Endothelial cell of umbilical vein (primary cell): ENCODE measurements at regions of chr15 and their contacts with region 1.

Region 1: DNA sequence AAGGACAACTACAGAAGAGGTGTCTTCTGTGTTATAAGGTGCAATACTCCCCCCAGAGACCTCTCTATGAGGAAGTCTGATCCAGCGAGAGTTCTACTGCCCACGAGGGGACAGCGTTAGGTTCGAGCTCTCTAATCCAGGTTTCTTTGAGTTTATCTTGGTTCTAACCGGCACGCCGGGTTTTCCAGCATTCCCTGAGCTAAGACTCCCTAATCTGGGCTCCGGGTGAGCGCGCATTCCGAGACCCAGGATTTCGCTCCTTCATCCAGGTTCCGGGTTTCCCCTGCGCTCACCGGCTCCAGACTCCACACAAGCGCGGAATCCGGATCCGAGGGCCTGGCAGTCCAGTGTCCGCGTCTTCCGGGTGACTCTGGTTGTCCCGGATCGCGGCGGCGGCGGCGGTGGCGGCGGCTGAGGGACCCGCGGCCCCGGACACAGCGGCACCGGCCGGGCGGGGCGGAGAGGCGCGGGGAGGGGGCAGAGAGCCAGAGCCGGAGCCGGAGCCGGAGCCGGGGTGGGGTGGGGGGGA is at the start of gene ZNF609:
- DNase-seq: peak; percentile 90
- H3K4me3 ChIP-seq: peak within 1 kb of the TSS; percentile 61 to 93 (median 80)
- H3K27ac ChIP-seq: peak within 1 kb of the TSS; percentile 59
- H3K4me1 ChIP-seq: peaks cover 21% of the 10 kb centered on the region
- H3K27me3 ChIP-seq: no peaks in the 10 kb centered on the region
- CTCF ChIP-seq: no peak
- POLR2A ChIP-seq: no peak
- total RNA-seq, gene ZNF609: 49.6 and 52.8 TPM in 2 replicates

Region 2: GRCh38 chr15:64430000-64430735 is 30.1 kb before region 1 on chr15:
- CTCF ChIA-PET with region 1: interaction called, 12 read pairs
- POLR2A ChIA-PET with region 1: interaction called, 3 read pairs
- dilution Hi-C with region 1: no loop called
- intact Hi-C with region 1: loop called (anchors 2 kb)
- DNase-seq: peak; percentile 77
- H3K4me3 ChIP-seq: no peak overlapping the region
- H3K27ac ChIP-seq: no peak overlapping the region
- H3K4me1 ChIP-seq: peaks cover 2% of the 10 kb centered on the region
- H3K27me3 ChIP-seq: no peaks in the 10 kb centered on the region
- CTCF ChIP-seq: no peak
- POLR2A ChIP-seq: no peak

Region 3: DNA sequence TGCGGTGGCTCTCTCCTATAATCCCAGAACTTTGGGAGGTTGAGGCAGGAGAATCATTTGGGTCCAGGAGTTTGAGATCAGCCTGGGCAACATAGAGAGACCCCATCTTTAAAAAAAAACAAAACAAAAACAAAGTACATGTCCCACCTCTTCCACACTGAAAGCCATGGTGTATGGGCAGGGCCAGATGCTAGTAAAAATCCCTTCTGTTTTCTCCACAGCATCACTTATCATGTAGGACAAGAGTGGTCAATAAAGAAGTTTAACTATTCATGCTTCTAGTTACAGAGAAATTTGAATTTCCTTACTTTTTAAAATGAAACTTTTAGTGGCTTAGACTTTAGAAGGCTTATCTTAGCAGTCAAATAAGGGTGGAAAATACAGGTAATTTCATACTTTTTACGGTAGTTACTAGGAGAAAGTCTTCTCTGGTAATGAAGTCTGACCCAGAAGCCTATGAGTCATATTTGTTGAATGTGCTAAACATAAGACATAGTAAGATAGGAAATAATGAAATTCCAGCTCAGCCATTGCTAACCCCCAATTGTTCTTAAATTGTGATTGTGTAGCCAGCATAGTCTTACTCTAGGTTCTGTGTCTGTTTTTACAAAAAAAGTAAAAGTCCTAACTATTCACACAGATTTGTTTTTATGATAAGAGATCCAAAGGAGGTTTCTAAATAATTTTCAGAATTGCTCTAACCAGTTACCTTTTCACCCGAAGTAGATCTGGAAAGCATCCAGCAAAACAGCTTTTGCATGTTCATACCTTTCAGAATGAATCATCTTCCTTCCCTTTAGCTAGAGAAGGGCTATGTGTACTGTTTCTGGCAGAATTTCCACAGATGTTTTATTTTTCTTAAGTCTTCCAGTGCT is 16.3 kb before region 1 on chr15:
- CTCF ChIA-PET with region 1: interaction called, 14 read pairs
- POLR2A ChIA-PET with region 1: no interaction called
- dilution Hi-C with region 1: no loop called
- intact Hi-C with region 1: loop called (anchors 1 kb)
- DNase-seq: peak; percentile 93
- H3K4me3 ChIP-seq: peak overlapping the region in 2 of 3 experiments; percentile 6 to 58
- H3K27ac ChIP-seq: peak overlapping the region; percentile 97
- H3K4me1 ChIP-seq: peaks cover 34% of the 10 kb centered on the region
- H3K27me3 ChIP-seq: no peaks in the 10 kb centered on the region
- CTCF ChIP-seq: no peak
- POLR2A ChIP-seq: peak; percentile 56

Region 4: GRCh38 chr15:64536244-64536836 is 76.1 kb after region 1 on chr15:
- CTCF ChIA-PET with region 1: interaction called, 3 read pairs
- POLR2A ChIA-PET with region 1: no interaction called
- dilution Hi-C with region 1: no loop called
- intact Hi-C with region 1: loop called (anchors 5 kb)
- DNase-seq: peak; percentile 91
- H3K4me3 ChIP-seq: no peak overlapping the region
- H3K27ac ChIP-seq: peak overlapping the region; percentile 89
- H3K4me1 ChIP-seq: peaks cover 16% of the 10 kb centered on the region
- H3K27me3 ChIP-seq: no peaks in the 10 kb centered on the region
- CTCF ChIP-seq: no peak
- POLR2A ChIP-seq: no peak

Region 5: DNA sequence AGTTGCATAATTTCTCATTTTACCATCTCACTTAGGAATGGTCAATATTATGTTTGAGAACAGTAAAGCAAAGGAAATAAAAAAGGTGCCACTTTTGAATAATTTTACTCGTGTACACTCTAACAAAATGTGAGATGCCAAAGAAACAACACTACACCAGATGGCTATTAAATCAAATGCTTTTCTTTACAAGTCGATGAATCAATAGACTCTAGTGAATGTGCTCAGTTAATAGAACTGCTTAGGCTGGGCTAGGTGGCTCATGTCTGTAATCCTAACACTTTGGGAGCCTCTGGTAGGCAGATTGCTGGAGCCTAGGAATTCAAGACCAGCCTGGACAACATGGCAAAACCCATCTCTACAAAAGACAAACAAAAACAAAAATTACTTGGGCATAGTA is 88.0 kb after region 1 on chr15:
- CTCF ChIA-PET with region 1: no interaction called
- POLR2A ChIA-PET with region 1: no interaction called
- dilution Hi-C with region 1: no loop called
- intact Hi-C with region 1: no loop called
- DNase-seq: no peak
- H3K4me3 ChIP-seq: no peak overlapping the region
- H3K27ac ChIP-seq: no peak overlapping the region
- H3K4me1 ChIP-seq: no peaks in the 10 kb centered on the region
- H3K27me3 ChIP-seq: no peaks in the 10 kb centered on the region
- CTCF ChIP-seq: no peak
- POLR2A ChIP-seq: no peak